ENCODE measurements at regions of chr3 and their contacts with region 1.

Region 1: GRCh38 chr3:183385698-183386613 is 42.5 kb downstream of the MCF2L2 start:
- DNase-seq: peak in 6 of 10 donors; percentile 30 to 85 (median 48)

Region 2: GRCh38 chr3:182713743-182714517 is 672.0 kb before region 1 on chr3:
- intact Hi-C with region 1: loop called (anchors 10 kb)
- DNase-seq: no peak

Region 3: GRCh38 chr3:183085634-183086390 is 300.1 kb before region 1 on chr3:
- intact Hi-C with region 1: no loop called
- DNase-seq: no peak

Region 4: GRCh38 chr3:183122257-183122932 is 263.6 kb before region 1 on chr3:
- intact Hi-C with region 1: loop called (anchors 1 kb)
- DNase-seq: no peak

Region 5: GRCh38 chr3:183178629-183179549 is 207.1 kb before region 1 on chr3:
- intact Hi-C with region 1: loop called (anchors 1 kb)
- DNase-seq: peak in 9 of 10 donors; percentile 41 to 93 (median 61)